ENCODE measurements at regions of chr12 and their contacts with region 1.

Region 1: DNA sequence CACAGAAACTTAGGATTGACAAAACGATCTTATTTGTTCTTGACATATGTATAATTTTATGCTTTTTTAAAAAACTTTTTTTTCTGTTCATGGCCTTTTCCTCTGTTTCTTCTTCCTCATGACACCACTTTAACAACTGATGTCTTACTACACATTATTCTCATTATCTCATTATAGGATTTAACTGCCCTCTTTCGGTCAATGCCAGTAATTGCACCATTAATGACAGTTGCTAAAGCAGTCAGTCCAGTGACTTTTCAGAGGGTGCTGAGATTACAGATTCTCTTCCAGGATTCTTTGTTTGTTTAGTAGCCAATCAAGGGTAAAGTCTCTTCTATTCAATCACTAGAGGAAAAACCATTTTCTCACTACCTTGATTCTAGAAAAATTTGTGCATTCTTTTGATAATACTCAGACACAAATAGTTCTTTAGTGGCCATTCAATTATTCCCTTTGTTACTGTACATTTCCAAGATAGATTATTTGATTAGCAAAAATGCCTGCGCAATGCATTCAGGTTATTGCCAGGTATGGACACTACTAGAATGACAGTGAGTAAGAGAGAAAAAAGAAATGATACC is 50.1 kb downstream of the KLRG1 start:
- DNase-seq: peak; percentile 25 to 77 (median 53)
- H3K4me3 ChIP-seq: no peak overlapping the region
- H3K4me3 Mint-ChIP-seq: no peak overlapping the region
- H3K27ac ChIP-seq: no peak overlapping the region
- H3K27ac Mint-ChIP-seq: no peak overlapping the region
- H3K4me1 ChIP-seq: no peaks in the 10 kb centered on the region
- H3K4me1 Mint-ChIP-seq: no peaks in the 10 kb centered on the region
- H3K27me3 ChIP-seq: no peaks in the 10 kb centered on the region
- H3K27me3 Mint-ChIP-seq: peaks cover 0 to 2% (median 2%) of the 10 kb centered on the region in 3 donors
- CTCF ChIP-seq: peak; percentile 83

Region 2: DNA sequence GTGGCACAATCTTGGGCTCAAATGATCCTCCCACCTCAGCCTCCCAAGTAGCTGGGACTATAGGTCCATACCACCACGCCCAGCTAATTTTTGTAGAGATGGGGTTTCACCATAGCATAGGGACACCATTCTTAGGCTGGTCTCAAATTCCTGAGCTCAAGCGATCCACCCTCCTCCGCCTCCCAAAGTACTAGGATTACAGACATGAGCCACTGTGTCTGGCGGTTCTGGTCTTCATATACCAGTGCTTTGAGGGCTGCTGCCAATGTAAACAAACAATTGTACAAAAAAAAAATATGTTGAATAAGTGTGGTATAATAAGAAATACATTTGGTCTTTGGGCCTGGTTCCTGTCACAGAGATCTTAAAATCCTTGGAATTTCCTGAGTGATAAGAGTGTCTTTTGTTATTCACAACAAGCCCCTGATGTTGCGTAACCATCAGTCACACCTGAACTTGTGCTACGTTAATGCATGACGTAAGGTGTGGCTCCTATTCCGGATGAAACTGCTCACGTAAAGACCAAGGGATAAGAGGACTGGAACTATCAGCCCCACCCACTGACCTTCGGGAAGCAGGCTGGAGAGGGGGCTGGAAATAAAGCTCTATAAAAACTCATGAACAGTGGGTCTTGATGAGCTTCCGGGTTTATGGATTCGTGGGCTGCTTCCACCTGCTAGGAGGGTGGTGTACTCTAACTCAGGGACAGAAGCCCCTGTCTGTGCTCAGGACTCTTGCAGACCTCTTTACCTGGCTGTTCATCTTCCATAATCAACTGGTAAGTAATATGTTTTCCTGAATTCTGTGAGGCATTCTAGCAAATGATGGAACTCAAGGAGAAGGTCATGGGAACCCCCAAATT is 358.2 kb before region 1 on chr12:
- intact Hi-C with region 1: loop called (anchors 5 to 10 kb)
- DNase-seq: no peak
- H3K4me3 ChIP-seq: no peak overlapping the region
- H3K4me3 Mint-ChIP-seq: no peak overlapping the region
- H3K27ac ChIP-seq: no peak overlapping the region
- H3K27ac Mint-ChIP-seq: peak overlapping the region in 1 of 7 donors; percentile 25
- H3K4me1 ChIP-seq: peaks cover 0 to 2% of the 10 kb centered on the region in 2 donors
- H3K4me1 Mint-ChIP-seq: peaks cover 18% of the 10 kb centered on the region
- H3K27me3 ChIP-seq: no peaks in the 10 kb centered on the region
- H3K27me3 Mint-ChIP-seq: peaks cover 0 to 3% (median 0%) of the 10 kb centered on the region in 3 donors
- CTCF ChIP-seq: no peak

Region 3: DNA sequence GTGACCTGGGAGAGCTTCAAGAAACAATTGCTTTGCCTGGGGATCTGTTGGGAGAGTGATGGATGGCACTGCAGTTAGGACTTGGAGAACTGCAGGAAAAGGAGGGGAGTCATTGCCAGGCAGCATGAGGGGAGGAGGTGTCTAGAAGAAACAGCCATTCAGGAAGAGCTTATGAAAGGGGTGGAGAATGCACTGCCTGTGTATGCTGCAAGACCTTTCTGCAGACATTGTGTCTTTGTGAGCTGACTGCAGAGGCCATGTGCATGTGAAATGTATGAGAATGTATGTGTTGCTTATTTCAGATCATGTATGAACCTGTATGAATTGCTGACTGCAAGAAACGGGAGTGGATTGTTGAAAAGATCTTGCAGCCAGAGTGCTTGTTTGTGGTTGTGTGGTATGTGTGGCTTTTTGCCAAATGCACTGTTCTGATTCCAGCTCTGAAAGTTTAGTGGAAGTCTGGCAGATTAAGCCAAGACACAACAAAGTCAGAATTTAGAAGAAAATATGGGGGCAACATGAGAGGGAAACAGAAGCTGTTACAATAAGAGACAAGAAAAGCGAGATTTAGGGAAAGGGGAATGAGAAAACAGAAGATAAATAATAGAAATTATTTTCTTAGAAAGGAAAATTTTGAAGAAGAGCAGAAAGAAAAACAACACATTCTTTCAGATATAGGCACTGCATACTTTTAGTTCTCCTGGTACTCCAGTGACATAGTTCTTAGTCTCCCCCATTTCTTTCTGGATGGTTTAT is 351.5 kb before region 1 on chr12:
- intact Hi-C with region 1: loop called (anchors 5 to 10 kb)
- DNase-seq: no peak
- H3K4me3 ChIP-seq: no peak overlapping the region
- H3K4me3 Mint-ChIP-seq: no peak overlapping the region
- H3K27ac ChIP-seq: peak overlapping the region in 1 of 2 donors; percentile 52
- H3K27ac Mint-ChIP-seq: no peak overlapping the region
- H3K4me1 ChIP-seq: peaks cover 19 to 20% of the 10 kb centered on the region in 2 donors
- H3K4me1 Mint-ChIP-seq: peaks cover 19% of the 10 kb centered on the region
- H3K27me3 ChIP-seq: no peaks in the 10 kb centered on the region
- H3K27me3 Mint-ChIP-seq: peaks cover 2 to 7% (median 4%) of the 10 kb centered on the region in 3 donors
- CTCF ChIP-seq: no peak

Region 4: DNA sequence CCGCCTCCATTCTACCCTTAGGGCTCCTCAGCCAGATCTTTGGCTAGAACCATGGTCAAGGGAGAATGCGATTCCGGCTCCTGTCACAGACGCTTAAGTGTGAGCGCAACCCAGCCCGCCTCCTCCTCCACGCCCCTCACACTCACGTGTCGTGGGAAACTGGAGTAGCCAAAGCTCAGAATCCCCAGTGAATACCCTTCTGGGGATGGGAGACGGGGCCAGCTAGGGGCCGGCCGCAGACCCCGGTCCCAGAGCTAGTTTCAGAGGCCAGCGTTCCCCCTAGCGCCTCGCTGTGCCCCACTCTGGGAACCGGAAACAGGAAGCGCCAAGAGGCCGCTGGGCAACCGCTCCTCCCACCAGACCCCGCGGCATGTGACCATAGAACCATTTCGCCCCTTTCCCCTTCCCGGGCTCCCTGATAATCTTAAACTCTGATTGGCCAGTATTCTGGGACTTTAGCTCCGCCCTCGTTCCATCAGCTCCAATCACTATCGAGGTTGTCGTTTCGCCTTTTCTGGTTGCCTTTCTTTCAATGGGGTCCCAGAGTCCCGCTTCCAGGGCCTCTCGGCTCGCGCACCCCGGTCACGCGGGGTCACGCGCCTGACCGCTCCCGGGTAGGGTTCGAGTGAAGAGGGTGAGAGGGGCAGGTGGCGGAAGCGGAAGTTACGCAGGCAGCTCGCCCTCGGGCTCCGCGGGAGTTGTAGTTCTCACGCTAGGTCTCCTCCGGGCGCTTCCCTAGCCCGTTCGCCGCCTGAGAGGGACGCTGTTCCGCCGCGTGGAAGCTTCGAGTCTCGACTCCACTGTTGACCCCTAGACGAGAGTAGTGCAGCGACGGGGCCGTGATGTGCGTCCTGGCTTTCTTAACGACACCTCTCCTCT is 89.9 kb before region 1 on chr12 and contains the start of gene M6PR:
- intact Hi-C with region 1: loop called (anchors 2 to 5 kb)
- DNase-seq: peak; percentile 92 to 95 (median 95)
- H3K4me3 ChIP-seq: peak within 1 kb of the TSS; percentile 82 to 97 (median 93)
- H3K4me3 Mint-ChIP-seq: peak within 1 kb of the TSS; percentile 98
- H3K27ac ChIP-seq: peak within 1 kb of the TSS; percentile 98 to 99
- H3K27ac Mint-ChIP-seq: peak within 1 kb of the TSS; percentile 95 to 100 (median 99)
- H3K4me1 ChIP-seq: peaks cover 25 to 41% of the 10 kb centered on the region in 2 donors
- H3K4me1 Mint-ChIP-seq: peaks cover 40% of the 10 kb centered on the region
- H3K27me3 ChIP-seq: no peaks in the 10 kb centered on the region
- H3K27me3 Mint-ChIP-seq: peaks cover 0 to 4% (median 0%) of the 10 kb centered on the region in 3 donors
- CTCF ChIP-seq: no peak
- polyA plus RNA-seq, gene M6PR: 158 to 285 (median 268) TPM

Region 5: DNA sequence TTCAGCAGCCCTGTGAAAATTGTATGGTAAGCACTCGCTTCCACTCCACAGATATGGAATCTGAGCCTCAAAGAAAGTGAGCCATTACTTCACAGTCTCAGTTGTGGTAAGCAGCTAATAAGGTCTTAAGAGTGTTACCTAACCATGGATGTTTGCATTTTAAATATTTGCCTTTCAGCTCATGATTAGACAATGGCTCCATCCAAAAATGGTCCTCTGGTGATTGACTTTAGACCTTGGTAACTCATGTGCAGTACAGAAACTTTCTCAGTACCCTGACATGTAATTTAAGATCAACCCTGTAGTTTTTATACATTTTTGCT is 74.5 kb after region 1 on chr12:
- intact Hi-C with region 1: no loop called
- DNase-seq: no peak
- H3K4me3 ChIP-seq: no peak overlapping the region
- H3K4me3 Mint-ChIP-seq: no peak overlapping the region
- H3K27ac ChIP-seq: no peak overlapping the region
- H3K27ac Mint-ChIP-seq: no peak overlapping the region
- H3K4me1 ChIP-seq: peaks cover 31 to 39% of the 10 kb centered on the region in 2 donors
- H3K4me1 Mint-ChIP-seq: peaks cover 36% of the 10 kb centered on the region
- H3K27me3 ChIP-seq: no peaks in the 10 kb centered on the region
- H3K27me3 Mint-ChIP-seq: peaks cover 0 to 2% (median 0%) of the 10 kb centered on the region in 3 donors
- CTCF ChIP-seq: no peak